ENCODE measurements at regions of chr2 and their contacts with region 1.

Region 1: DNA sequence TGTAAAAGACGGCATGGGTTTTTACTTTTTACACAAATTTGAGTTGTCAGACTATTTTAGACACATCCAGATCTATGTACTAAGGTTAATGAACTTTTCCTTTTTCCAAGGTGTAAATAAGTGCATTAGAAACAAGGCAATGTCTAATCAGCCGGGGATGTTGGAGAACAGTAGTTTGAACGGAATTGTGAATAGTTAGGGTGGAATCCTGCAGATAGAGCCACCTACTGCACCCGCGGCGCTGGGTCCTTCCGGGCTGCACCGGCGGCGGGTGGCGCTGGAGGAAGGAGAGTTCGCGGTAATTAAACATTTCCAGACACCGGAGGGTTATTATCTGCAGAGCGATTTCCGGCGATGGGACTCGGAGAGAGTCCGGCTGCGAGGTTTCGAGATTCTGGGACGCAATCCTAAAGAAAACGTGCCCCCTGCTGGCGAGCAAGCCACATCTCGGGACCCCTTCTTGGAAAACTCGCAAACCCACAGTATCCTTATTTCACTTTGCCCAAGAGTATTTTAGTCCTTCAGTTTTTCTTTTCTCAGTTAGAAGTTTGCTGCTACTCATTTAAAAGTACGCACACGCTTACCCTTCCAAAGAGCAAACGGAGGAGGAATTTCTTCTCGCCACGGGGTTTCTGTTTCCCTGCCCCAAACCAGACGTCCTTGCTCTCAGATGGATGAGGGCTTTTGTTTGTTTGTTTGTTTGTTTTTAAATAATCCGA is 4.5 kb upstream of the OSR1 start:
- DNase-seq: peak; percentile 81
- H3K4me3 ChIP-seq: peak overlapping the region; percentile 41 to 44
- H3K27ac ChIP-seq: peak overlapping the region; percentile 51 to 54
- H3K4me1 ChIP-seq: no peaks in the 10 kb centered on the region
- H3K27me3 ChIP-seq: no peaks in the 10 kb centered on the region
- CTCF ChIP-seq: peak; percentile 78 to 93 (median 82)
- POLR2A ChIP-seq: no peak

Region 2: GRCh38 chr2:18387441-18388206 is 975.3 kb before region 1 on chr2:
- intact Hi-C with region 1: loop called (anchors 5 kb)
- DNase-seq: peak; percentile 61
- H3K4me3 ChIP-seq: no peak overlapping the region
- H3K27ac ChIP-seq: no peak overlapping the region
- H3K4me1 ChIP-seq: no peaks in the 10 kb centered on the region
- H3K27me3 ChIP-seq: no peaks in the 10 kb centered on the region
- CTCF ChIP-seq: peak; percentile 77 to 98 (median 86)
- POLR2A ChIP-seq: no peak

Region 3: DNA sequence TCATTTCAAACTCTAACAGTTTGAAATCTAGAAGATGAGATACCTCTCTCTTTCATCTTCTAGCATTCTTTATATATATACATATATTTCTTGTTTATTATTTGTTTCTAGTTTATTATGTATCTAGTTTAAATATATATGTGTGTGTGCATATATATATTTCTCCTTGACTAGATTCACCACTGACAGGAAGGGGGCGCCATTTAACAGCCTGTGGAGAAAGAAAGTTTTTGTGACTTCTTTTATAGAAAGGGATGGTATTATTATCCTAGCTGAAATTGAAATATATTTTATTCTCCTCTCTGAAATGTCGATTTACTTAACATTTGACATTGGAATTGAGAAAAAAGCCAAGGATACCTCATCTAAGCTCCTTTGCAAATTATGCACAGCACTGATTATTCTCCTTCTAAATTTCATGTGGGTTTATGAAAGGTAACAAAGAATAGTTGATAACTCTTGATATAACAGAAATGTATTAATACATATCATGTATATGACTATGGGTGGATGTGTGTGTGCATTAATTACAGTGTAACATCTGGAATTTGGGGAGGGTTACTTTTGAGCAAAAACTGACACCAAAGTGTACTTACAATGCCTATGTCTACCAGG is 612.9 kb before region 1 on chr2:
- intact Hi-C with region 1: loop called (anchors 2 kb)
- DNase-seq: peak; percentile 67
- H3K4me3 ChIP-seq: no peak overlapping the region
- H3K27ac ChIP-seq: no peak overlapping the region
- H3K4me1 ChIP-seq: no peaks in the 10 kb centered on the region
- H3K27me3 ChIP-seq: no peaks in the 10 kb centered on the region
- CTCF ChIP-seq: peak; percentile 39 to 88 (median 81)
- POLR2A ChIP-seq: no peak

Region 4: GRCh38 chr2:18987592-18988073 is 375.3 kb before region 1 on chr2:
- intact Hi-C with region 1: loop called (anchors 5 kb)
- DNase-seq: peak; percentile 79
- H3K4me3 ChIP-seq: no peak overlapping the region
- H3K27ac ChIP-seq: no peak overlapping the region
- H3K4me1 ChIP-seq: no peaks in the 10 kb centered on the region
- H3K27me3 ChIP-seq: no peaks in the 10 kb centered on the region
- CTCF ChIP-seq: peak in 2 of 4 experiments; percentile 22 to 50
- POLR2A ChIP-seq: no peak

Region 5: DNA sequence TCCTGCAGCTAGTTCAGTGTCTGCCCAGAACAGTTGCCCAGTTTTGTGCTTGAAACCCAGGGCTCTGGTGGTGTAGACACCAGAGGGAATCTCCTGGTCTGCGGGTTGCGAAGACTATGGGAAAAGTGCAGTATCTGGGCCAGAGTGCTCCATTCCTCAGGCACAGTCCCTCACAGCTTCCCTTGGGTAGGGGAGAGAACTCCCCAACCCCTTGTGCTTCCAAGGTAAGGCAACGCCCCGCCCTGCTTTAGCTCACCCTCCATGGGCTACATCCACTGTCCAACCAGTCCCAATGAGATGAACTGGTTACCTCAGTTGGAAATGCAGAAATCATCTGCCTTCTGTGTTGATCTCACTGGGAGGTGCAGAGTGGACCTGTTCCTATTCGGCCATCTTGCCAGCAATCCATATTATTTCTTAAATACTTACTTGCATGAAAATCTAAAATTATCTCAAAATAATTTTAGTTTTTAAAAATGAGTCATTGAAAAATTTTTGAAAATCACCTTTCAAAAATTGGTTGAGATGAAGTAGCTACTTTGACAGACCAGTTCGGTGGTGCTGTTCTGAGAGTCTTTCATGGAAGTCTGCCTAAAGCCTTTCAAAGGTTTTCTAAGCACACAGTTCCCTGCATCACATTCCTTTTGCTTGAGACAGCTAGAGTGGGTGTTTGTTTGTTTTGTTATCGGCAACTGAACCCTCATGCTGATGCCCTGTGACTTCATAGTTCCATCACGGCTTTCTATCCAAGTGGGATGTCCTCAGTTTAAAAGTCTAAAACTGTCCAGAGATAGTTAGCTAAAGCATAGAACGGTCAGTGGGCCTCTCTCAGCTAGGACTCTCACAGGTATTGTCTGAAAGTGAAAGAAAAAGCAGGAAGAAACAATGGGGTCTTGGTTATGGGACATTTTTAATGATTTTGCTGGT is 342.1 kb before region 1 on chr2:
- intact Hi-C with region 1: no loop called
- DNase-seq: no peak
- H3K4me3 ChIP-seq: no peak overlapping the region
- H3K27ac ChIP-seq: no peak overlapping the region
- H3K4me1 ChIP-seq: no peaks in the 10 kb centered on the region
- H3K27me3 ChIP-seq: no peaks in the 10 kb centered on the region
- CTCF ChIP-seq: no peak
- POLR2A ChIP-seq: no peak

Region 6: GRCh38 chr2:19863303-19864041 is 500.6 kb after region 1 on chr2:
- intact Hi-C with region 1: loop called (anchors 5 kb)
- DNase-seq: peak; percentile 44
- H3K4me3 ChIP-seq: no peak overlapping the region
- H3K27ac ChIP-seq: no peak overlapping the region
- H3K4me1 ChIP-seq: no peaks in the 10 kb centered on the region
- H3K27me3 ChIP-seq: no peaks in the 10 kb centered on the region
- CTCF ChIP-seq: peak; percentile 79 to 96 (median 92)
- POLR2A ChIP-seq: no peak

Measured in prostate gland (tissue), 2 donors.